Right ventricle myocardium inferior (tissue), 1 donor: ENCODE measurements at regions of chr7 and their contacts with region 1.

Region 1: GRCh38 chr7:6589829-6590644 is at the start of gene INTS15:
- DNase-seq: peak; percentile 90
- ATAC-seq: peak; percentile 98
- total RNA-seq, gene INTS15: 15.9 TPM

Region 2: GRCh38 chr7:6317797-6318438 is 272.1 kb before region 1 on chr7:
- intact Hi-C with region 1: no loop called
- DNase-seq: peak; percentile 80
- ATAC-seq: peak; percentile 93

Region 3: DNA sequence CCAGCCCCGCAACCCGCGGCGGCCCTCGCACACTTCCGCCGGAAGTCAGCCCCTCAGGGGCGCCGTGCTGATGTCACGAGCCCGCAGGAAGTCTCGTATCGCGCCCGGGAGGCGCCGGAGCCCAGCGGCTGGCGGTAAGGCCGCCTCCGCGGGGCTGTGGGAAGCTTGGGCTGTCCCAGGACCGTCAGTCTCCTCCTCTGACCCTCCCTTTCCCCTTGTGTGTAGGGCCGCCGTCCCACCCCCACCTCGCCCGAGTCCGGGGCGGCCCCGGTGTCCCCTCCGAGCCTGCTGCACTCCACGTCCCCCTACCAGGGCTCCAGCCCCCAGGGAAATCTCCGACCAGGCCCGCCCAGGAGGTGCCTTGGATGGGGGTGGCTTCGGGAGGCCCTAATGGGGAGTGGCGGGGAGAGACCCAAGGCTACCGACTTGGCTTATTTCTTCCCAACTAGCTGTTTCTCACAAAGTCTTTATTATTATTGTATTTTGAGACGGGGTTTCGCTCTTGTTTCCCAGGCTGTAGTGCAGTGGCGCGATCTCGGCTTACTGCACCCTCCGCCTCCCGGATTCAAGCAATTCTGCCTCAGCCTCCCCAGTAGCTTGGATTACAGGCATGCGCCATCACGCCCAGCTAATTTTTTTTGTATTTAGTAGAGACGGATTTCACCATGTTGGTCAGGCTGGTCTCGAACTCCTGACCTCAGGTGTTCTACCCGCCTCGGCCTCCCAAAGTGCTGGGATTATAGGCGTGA is 12.5 kb before region 1 on chr7 and contains the start of gene ZDHHC4:
- intact Hi-C with region 1: loop called (anchors 2 kb)
- DNase-seq: peak; percentile 94
- ATAC-seq: peak; percentile 99
- total RNA-seq, gene ZDHHC4: 39.3 TPM

Region 4: DNA sequence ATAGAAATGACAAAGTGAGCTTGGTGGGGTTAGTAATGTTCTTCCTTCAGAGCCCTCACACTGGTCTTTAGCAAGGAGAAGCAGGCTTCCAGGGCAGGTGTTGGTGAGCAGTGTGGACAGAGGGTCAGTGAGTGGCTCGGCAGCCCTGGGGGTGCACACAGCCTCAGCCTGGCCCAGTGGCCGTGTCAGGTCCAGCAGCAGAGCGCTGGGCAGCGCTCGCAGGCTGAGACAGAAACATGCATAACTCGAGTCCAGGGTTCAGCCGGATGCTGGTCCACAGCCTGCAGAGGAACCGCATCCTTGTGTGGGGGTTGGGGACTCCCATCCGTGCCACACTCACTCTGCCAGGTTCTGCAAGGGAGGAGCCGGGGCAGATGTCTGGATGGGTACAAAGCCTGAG is 14.4 kb after region 1 on chr7:
- intact Hi-C with region 1: no loop called
- DNase-seq: peak; percentile 37
- ATAC-seq: no peak

Region 5: GRCh38 chr7:6637544-6638229 is 47.6 kb after region 1 on chr7:
- intact Hi-C with region 1: no loop called
- DNase-seq: no peak
- ATAC-seq: peak; percentile 23

Region 6: GRCh38 chr7:6651851-6652445 is 61.9 kb after region 1 on chr7:
- intact Hi-C with region 1: no loop called
- DNase-seq: no peak
- ATAC-seq: no peak